ENCODE measurements at regions of chr15 and their contacts with region 1.

Region 1: DNA sequence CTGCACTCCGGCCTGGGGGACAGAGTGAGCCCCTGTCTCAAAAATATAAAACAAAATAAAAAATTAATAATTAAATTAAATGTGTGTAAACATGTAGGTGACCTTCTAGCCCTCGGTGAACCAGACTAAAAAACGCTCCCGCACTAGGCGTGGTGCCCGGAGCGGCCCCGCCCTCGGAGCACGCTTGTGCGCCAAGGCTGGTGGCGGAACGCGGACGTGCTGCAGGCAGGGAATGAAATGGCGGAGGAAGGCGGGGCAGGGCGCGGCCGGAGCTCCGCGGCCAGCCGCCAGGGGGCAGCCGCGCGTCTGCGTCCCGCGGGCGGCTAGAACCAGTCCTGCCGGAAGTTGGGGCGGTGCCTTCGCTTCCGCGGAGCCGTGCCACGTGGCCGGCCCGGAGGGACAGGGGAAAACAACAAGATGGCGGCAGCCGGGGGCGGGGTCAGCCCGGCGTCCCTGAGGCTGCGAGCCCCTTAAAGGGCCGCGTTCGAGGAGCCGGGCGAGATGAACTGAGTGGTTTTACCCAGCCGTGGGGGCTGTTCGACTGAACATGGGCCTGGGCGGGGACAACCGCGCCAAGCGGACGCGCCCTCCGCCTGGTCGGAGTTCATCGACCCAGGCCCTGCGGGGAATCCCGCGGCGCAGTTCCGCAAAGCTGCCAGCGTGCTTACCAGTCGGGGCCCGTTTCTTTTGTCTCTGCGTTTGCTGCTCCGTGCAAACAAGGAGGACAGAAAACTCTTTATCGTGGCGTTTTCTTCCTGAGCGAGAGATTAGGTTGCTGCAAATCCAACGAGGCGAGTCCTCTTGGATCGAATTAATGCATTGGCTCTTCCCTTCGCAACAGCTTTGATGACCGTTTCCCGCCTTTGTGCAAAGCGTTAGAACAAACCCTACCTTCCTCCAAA is 90.9 kb upstream of the CHD2 start:
- DNase-seq: peak; percentile 85
- H3K4me3 ChIP-seq: peak overlapping the region; percentile 48 to 85 (median 64)
- H3K27ac ChIP-seq: peak overlapping the region; percentile 97 to 100 (median 99)
- H3K4me1 ChIP-seq: peaks cover 13 to 79% (median 22%) of the 10 kb centered on the region in 3 donors
- H3K27me3 ChIP-seq: no peaks in the 10 kb centered on the region
- CTCF ChIP-seq: peak; percentile 94 to 100 (median 100)
- POLR2A ChIP-seq: peak in 3 of 4 donors; percentile 67 to 87 (median 69)

Region 2: DNA sequence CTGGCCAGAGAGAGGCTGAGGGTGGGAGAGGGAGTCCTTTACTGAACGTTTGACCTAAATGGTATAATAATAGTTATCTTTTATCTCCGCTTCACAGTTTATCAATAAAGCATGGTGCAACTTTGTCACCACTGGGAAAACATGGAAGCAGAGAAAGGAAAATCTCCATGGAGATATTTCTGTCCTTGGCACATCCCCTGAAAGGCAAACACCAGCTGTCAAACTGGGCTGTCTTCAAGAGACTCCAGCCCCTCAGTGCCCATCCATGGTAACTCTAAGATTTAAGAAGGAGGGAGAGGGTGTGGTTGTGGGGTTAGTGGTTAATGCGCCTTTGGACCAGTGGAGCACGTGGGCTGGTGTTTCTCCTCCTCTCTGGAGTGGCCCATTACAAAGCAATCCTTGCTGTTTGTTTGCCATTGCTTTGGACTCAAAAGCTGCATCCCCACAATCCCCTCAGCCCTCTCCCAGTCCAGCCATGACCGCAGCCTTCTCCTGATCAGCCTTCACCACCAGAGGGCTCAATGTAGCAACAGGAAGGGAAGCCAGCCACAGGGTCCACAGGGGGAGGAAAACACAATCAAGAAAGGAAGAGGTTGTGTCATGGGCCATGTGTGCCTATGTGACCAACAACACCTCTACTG is 115.4 kb before region 1 on chr15:
- intact Hi-C with region 1: no loop called
- DNase-seq: no peak
- H3K4me3 ChIP-seq: no peak overlapping the region
- H3K27ac ChIP-seq: no peak overlapping the region
- H3K4me1 ChIP-seq: peaks cover 0 to 12% (median 0%) of the 10 kb centered on the region in 3 donors
- H3K27me3 ChIP-seq: no peaks in the 10 kb centered on the region
- CTCF ChIP-seq: no peak
- POLR2A ChIP-seq: no peak

Region 3: GRCh38 chr15:92881802-92882696 is 72.8 kb after region 1 on chr15:
- intact Hi-C with region 1: loop called (anchors 5 kb)
- DNase-seq: peak; percentile 98
- H3K4me3 ChIP-seq: peak overlapping the region; percentile 71 to 99 (median 86)
- H3K27ac ChIP-seq: peak overlapping the region; percentile 95 to 100 (median 100)
- H3K4me1 ChIP-seq: peaks cover 8 to 38% (median 18%) of the 10 kb centered on the region in 3 donors
- H3K27me3 ChIP-seq: no peaks in the 10 kb centered on the region
- CTCF ChIP-seq: peak in 1 of 6 experiments; percentile 17
- POLR2A ChIP-seq: peak in 3 of 4 donors; percentile 86 to 88 (median 87)

Region 4: GRCh38 chr15:92917606-92918407 is 108.6 kb after region 1 on chr15:
- intact Hi-C with region 1: loop called (anchors 5 kb)
- DNase-seq: peak; percentile 56
- H3K4me3 ChIP-seq: peak overlapping the region in 2 of 4 donors; percentile 12 to 50
- H3K27ac ChIP-seq: peak overlapping the region; percentile 86 to 100 (median 91)
- H3K4me1 ChIP-seq: peaks cover 35 to 100% (median 83%) of the 10 kb centered on the region in 3 donors
- H3K27me3 ChIP-seq: no peaks in the 10 kb centered on the region
- CTCF ChIP-seq: peak; percentile 85 to 99 (median 97)
- POLR2A ChIP-seq: no peak